Activated naive CD4-positive, alpha-beta T cell treated with anti-CD3 and anti-CD28 coated beads for 36 hours (primary cell): ENCODE measurements at regions of chr16 and their contacts with region 1.

Region 1: DNA sequence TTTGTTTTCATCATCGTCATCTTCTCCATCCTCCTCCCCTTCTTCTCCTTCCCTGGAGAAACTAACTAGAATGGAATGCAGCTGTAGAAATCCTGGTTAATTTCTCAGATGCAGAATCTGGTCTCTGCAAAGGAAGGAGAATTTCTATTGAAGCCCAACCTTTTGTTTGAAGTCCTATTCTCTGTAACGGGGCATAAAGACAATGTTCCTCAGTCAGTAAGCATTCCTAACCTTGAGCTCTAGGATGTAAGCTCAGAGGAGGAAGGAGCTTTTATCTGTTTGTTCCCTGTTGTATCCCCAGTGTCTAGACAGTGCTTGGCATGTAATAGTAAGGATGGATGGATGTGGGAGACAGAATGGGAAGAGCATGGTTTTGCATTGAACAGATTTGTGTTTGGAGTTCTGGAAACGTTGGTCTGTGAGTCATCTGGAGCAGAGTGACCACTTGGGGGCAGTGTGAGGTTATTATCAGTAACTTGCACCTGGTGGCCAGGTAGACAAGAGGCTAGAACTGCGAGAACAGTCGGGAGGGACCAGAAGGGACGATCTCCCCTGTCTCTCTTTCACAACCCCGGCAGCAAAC is 363.7 kb downstream of the SNX29 start:
- DNase-seq: peak; percentile 64
- H3K4me3 Mint-ChIP-seq: no peak overlapping the region
- H3K27ac Mint-ChIP-seq: no peak overlapping the region
- H3K4me1 Mint-ChIP-seq: no peaks in the 10 kb centered on the region
- H3K27me3 Mint-ChIP-seq: no peaks in the 10 kb centered on the region

Region 2: GRCh38 chr16:11964761-11965551 is 375.3 kb before region 1 on chr16 and contains the start of gene TNFRSF17:
- CTCF ChIA-PET with region 1: no interaction called
- intact Hi-C with region 1: no loop called
- DNase-seq: no peak
- H3K4me3 Mint-ChIP-seq: no peak within 1 kb of the TSS
- H3K27ac Mint-ChIP-seq: no peak within 1 kb of the TSS
- H3K4me1 Mint-ChIP-seq: no peaks in the 10 kb centered on the region
- H3K27me3 Mint-ChIP-seq: no peaks in the 10 kb centered on the region
- total RNA-seq, gene TNFRSF17: not detected

Region 3: GRCh38 chr16:12228602-12229499 is 111.4 kb before region 1 on chr16:
- CTCF ChIA-PET with region 1: no interaction called
- intact Hi-C with region 1: no loop called
- DNase-seq: peak; percentile 56
- H3K4me3 Mint-ChIP-seq: no peak overlapping the region
- H3K27ac Mint-ChIP-seq: no peak overlapping the region
- H3K4me1 Mint-ChIP-seq: peaks cover 19% of the 10 kb centered on the region
- H3K27me3 Mint-ChIP-seq: no peaks in the 10 kb centered on the region

Region 4: DNA sequence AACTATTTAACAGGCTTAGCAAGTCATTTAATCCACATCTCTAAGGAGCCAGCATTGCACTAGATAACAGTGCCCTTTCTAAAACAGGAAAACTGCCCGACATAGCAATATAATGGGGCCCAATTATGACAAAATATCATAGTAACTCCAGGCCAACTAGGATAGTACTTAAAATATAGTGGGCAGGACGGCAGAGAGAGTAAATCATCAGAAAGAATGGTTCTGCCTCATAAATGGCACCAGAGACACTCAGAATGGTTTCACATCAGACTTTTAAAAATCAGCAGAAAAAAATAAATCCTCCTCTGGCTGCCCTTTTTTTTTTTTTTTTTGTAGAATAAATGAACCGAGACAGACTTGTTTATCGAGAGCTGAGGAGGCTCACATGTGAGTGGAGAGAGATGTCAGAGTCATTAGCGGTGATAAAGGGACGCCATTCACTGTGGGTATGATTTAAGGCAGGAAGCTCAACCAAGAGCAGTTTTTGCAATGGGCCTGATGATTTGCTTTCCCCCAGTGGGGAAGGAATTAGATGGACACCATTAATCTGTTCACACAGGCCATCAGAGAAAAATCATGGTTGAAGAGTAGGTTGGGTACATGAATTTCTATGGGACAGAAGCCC is 400.9 kb after region 1 on chr16:
- CTCF ChIA-PET with region 1: no interaction called
- intact Hi-C with region 1: no loop called
- DNase-seq: no peak
- H3K4me3 Mint-ChIP-seq: no peak overlapping the region
- H3K27ac Mint-ChIP-seq: no peak overlapping the region
- H3K4me1 Mint-ChIP-seq: no peaks in the 10 kb centered on the region
- H3K27me3 Mint-ChIP-seq: no peaks in the 10 kb centered on the region

Region 5: GRCh38 chr16:12819126-12820117 is 479.2 kb after region 1 on chr16:
- CTCF ChIA-PET with region 1: no interaction called
- intact Hi-C with region 1: loop called (anchors 2 kb)
- DNase-seq: peak; percentile 88
- H3K4me3 Mint-ChIP-seq: no peak overlapping the region
- H3K27ac Mint-ChIP-seq: no peak overlapping the region
- H3K4me1 Mint-ChIP-seq: no peaks in the 10 kb centered on the region
- H3K27me3 Mint-ChIP-seq: no peaks in the 10 kb centered on the region